CD4-positive, alpha-beta memory T cell (primary cell): ENCODE measurements at regions of chr21 and their contacts with region 1.

Region 1: GRCh38 chr21:44817506-44817880 is 369 bp downstream of the SUMO3 start:
- DNase-seq: peak; percentile 89 to 91 (median 91)
- H3K4me3 ChIP-seq: peak overlapping the region in 1 of 2 donors; percentile 57
- H3K4me3 Mint-ChIP-seq: peak overlapping the region; percentile 23 to 80 (median 58)
- H3K27ac ChIP-seq: no peak overlapping the region
- H3K27ac Mint-ChIP-seq: peak overlapping the region in 3 of 7 donors; percentile 17 to 48 (median 31)
- H3K4me1 ChIP-seq: peaks cover 16% of the 10 kb centered on the region
- H3K4me1 Mint-ChIP-seq: peaks cover 1 to 34% (median 16%) of the 10 kb centered on the region in 4 donors
- H3K27me3 ChIP-seq: no peaks in the 10 kb centered on the region
- H3K27me3 Mint-ChIP-seq: no peaks in the 10 kb centered on the region

Region 2: DNA sequence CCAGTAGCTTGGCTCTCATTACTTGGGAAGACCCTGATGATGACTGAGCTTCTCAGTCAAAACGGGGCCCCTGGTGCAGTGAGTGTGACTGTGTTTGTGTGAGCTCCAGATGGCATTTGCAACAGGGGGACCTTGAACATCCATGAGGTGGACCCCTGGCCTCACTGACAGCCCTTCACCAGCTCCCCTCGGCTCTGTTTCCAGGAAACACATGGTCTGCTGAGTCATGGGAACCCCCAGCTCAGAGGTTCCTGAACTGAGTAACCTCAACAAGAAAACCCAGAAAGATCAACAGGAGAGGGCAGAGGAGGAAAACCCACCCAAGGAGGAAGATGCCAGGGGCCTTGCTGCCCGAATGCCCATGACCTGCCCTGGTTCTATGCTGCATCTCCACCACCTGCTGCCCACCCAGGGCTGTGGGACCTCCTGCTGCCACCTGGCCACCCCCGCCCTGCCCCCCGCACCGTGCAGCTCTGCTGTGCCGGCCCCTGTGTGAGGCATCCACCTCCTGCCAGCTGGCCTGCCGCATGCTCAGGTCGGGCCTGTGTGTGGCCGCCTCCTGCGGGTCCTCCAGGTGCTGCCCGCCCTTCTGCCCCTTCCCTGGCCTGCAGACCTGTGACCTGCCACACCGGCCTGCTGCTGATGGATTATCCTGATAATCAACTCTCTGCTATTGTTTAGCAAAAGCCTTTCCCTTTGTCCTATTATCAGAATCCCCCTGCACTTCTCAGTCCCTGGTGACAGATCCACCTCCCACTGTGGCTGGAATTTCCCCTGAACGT is 131.3 kb before region 1 on chr21:
- CTCF ChIA-PET with region 1: no interaction called
- POLR2A ChIA-PET with region 1: no interaction called
- intact Hi-C with region 1: no loop called
- DNase-seq: no peak
- H3K4me3 ChIP-seq: no peak overlapping the region
- H3K4me3 Mint-ChIP-seq: no peak overlapping the region
- H3K27ac ChIP-seq: no peak overlapping the region
- H3K27ac Mint-ChIP-seq: peak overlapping the region in 2 of 7 donors; percentile 43 to 75
- H3K4me1 ChIP-seq: no peaks in the 10 kb centered on the region
- H3K4me1 Mint-ChIP-seq: peaks cover 0 to 7% (median 4%) of the 10 kb centered on the region in 4 donors
- H3K27me3 ChIP-seq: no peaks in the 10 kb centered on the region
- H3K27me3 Mint-ChIP-seq: peaks cover 6 to 10% of the 10 kb centered on the region in 2 donors

Region 3: GRCh38 chr21:45011911-45012660 is 194.6 kb after region 1 on chr21:
- CTCF ChIA-PET with region 1: no interaction called
- POLR2A ChIA-PET with region 1: no interaction called
- intact Hi-C with region 1: no loop called
- DNase-seq: no peak
- H3K4me3 ChIP-seq: no peak overlapping the region
- H3K4me3 Mint-ChIP-seq: no peak overlapping the region
- H3K27ac ChIP-seq: no peak overlapping the region
- H3K27ac Mint-ChIP-seq: no peak overlapping the region
- H3K4me1 ChIP-seq: no peaks in the 10 kb centered on the region
- H3K4me1 Mint-ChIP-seq: no peaks in the 10 kb centered on the region
- H3K27me3 ChIP-seq: peaks cover 2% of the 10 kb centered on the region
- H3K27me3 Mint-ChIP-seq: peaks cover 21 to 31% of the 10 kb centered on the region in 2 donors

Region 4: GRCh38 chr21:45643021-45643980 is 825.8 kb after region 1 on chr21 and contains the start of gene PCBP3:
- CTCF ChIA-PET with region 1: no interaction called
- POLR2A ChIA-PET with region 1: no interaction called
- intact Hi-C with region 1: loop called (anchors 10 kb)
- DNase-seq: peak; percentile 87 to 96 (median 89)
- H3K4me3 ChIP-seq: no peak within 1 kb of the TSS
- H3K4me3 Mint-ChIP-seq: peak within 1 kb of the TSS; percentile 69 to 83 (median 78)
- H3K27ac ChIP-seq: no peak within 1 kb of the TSS
- H3K27ac Mint-ChIP-seq: peak within 1 kb of the TSS in 5 of 7 donors; percentile 78 to 98 (median 82)
- H3K4me1 ChIP-seq: peaks cover 24% of the 10 kb centered on the region
- H3K4me1 Mint-ChIP-seq: peaks cover 7 to 38% (median 25%) of the 10 kb centered on the region in 4 donors
- H3K27me3 ChIP-seq: peaks cover 11% of the 10 kb centered on the region
- H3K27me3 Mint-ChIP-seq: peaks cover 10 to 20% of the 10 kb centered on the region in 2 donors
- total RNA-seq, gene PCBP3: 0.99 to 1.6 TPM